Activated CD4-positive, alpha-beta memory T cell treated with anti-CD3 and anti-CD28 coated beads, Interleukin-2, amount 10 ng/mL, durations not matched to agents 7 days and 5 days (primary cell): ENCODE measurements at regions of chr2 and their contacts with region 1.

Region 1: GRCh38 chr2:168920504-168921157 is 19.5 kb downstream of the G6PC2 start:
- DNase-seq: no peak
- H3K4me3 Mint-ChIP-seq: no peak overlapping the region
- H3K27ac Mint-ChIP-seq: no peak overlapping the region
- H3K4me1 Mint-ChIP-seq: peaks cover 11% of the 10 kb centered on the region
- H3K27me3 Mint-ChIP-seq: peaks cover 34% of the 10 kb centered on the region

Region 2: DNA sequence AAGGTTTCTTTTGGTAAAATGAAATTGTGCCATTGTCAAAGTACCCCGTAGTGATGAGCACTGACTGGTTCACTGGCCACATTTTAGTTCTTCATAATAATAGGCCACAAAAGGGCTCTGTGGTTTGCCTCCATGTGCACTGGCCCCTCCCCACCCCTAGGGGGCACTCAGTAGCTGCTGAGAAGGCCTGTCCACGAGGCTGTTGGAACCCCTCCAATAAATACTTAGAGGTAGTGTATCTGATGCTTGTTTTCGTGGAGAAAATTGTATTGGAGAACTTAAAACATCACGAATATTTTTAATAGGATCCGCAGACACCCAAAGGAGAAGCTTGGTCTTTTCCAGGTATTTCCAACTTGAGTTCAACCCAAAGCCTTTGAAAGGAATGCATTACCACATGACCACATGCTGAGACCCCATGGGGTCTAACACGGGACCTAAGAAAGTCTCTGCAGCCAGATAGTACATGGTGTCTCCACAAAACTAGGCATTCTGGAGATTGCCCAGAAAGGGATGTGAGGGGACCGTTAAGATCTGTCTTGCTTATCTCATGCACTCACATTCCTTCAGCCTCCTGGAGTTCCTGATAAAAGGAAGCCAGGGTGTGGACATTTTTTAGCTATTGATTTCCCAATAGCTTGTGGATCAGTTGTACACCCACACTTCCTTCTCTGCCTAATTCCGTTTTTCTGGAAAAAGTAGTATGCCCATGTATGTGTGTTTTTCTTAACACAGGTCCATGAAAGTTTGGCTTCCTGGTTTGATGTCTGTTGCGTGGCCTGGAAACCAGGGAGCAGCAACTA is 146.7 kb before region 1 on chr2:
- CTCF ChIA-PET with region 1: interaction called, 27 read pairs
- POLR2A ChIA-PET with region 1: no interaction called
- DNase-seq: peak; percentile 58
- H3K4me3 Mint-ChIP-seq: no peak overlapping the region
- H3K27ac Mint-ChIP-seq: no peak overlapping the region
- H3K4me1 Mint-ChIP-seq: no peaks in the 10 kb centered on the region
- H3K27me3 Mint-ChIP-seq: no peaks in the 10 kb centered on the region